ENCODE measurements at regions of chr19 and their contacts with region 1.

Region 1: DNA sequence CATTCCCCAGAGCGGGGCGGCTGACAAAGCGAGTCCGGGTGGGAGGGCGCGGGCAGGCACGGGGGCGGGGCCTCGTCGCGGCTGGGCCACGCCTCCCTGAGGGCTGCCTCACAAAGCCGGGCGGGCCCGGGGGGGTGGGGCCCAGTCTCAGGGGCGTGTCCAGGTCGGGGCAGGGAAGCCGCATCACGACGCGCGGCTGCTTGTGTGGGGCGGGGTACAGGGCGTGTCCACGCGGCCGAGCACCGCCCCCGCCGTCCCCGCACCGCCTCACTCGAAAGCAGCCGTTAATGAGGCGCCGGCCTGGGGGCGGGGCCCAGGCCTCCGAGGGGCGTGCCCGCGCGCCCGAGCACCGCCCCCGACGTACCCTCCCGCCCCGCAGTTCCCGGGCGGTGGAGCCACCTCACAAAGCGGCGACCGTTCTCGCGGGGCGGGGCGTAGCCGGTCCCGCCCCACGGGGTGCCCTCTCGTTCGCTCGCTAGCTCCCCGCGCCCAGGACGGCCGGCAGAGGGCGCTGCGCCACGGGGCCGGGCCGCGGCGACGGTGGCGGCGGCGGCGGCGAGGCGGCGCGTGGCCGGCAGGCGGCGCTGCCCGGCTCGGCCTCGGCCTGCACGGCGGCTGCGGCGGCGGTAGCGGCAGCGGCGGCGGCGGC is at the start of gene CARM1:
- DNase-seq: peak; percentile 98 to 99 (median 99)
- ATAC-seq: peak; percentile 94
- H3K4me3 ChIP-seq: peak within 1 kb of the TSS; percentile 98
- H3K27ac ChIP-seq: peak within 1 kb of the TSS; percentile 87
- H3K4me1 ChIP-seq: peaks cover 8 to 38% of the 10 kb centered on the region in 2 experiments
- H3K27me3 ChIP-seq: no peaks in the 10 kb centered on the region
- CTCF ChIP-seq: peak; percentile 48 to 94 (median 92); a peak in 5 of 6 replicates
- EP300 ChIP-seq: no peak
- POLR2A ChIP-seq: no peak
- RAD21 ChIP-seq: peak in 1 of 2 experiments; percentile 63; a peak in 2 of 4 replicates
- polyA plus RNA-seq, gene CARM1: 0.36 to 0.65 TPM

Region 2: GRCh38 chr19:10820173-10820572 is 50.9 kb before region 1 on chr19:
- CTCF ChIA-PET with region 1: no interaction called
- POLR2A ChIA-PET with region 1: no interaction called
- in situ Hi-C with region 1: no loop called
- intact Hi-C with region 1: no loop called
- DNase-seq: peak; percentile 42 to 52 (median 50)
- ATAC-seq: peak; percentile 78
- H3K4me3 ChIP-seq: no peak overlapping the region
- H3K27ac ChIP-seq: no peak overlapping the region; the same call in 2 of the 3 replicates
- H3K4me1 ChIP-seq: peaks cover 12 to 60% of the 10 kb centered on the region in 2 experiments; a peak in 4 of 5 replicates
- H3K27me3 ChIP-seq: no peaks in the 10 kb centered on the region
- CTCF ChIP-seq: peak; percentile 44 to 70 (median 54)
- EP300 ChIP-seq: no peak
- POLR2A ChIP-seq: no peak
- RAD21 ChIP-seq: peak in 1 of 2 experiments; percentile 49; a peak in 2 of 4 replicates

Region 3: GRCh38 chr19:10928525-10929401 is 57.7 kb after region 1 on chr19 and contains the starts of genes TIMM29 and YIPF2:
- CTCF ChIA-PET with region 1: no interaction called
- POLR2A ChIA-PET with region 1: interaction called, 3 read pairs
- in situ Hi-C with region 1: no loop called
- intact Hi-C with region 1: loop called (anchors 5 kb)
- DNase-seq: peak; percentile 94 to 99 (median 96)
- ATAC-seq: peak; percentile 94
- H3K4me3 ChIP-seq: peak within 1 kb of the TSS; percentile 93
- H3K27ac ChIP-seq: peak within 1 kb of the TSS; percentile 78
- H3K4me1 ChIP-seq: peaks cover 6 to 28% of the 10 kb centered on the region in 2 experiments; a peak in 4 of 5 replicates
- H3K27me3 ChIP-seq: no peaks in the 10 kb centered on the region
- CTCF ChIP-seq: no peak; a peak in 1 of 6 replicates
- EP300 ChIP-seq: peak; percentile 84
- POLR2A ChIP-seq: peak; percentile 79
- RAD21 ChIP-seq: no peak
- polyA plus RNA-seq, gene TIMM29: 2.4 to 3.2 TPM
- polyA plus RNA-seq, gene YIPF2: 1.3 to 2.2 TPM

Region 4: GRCh38 chr19:10975374-10976130 is 104.5 kb after region 1 on chr19:
- CTCF ChIA-PET with region 1: no interaction called
- POLR2A ChIA-PET with region 1: no interaction called
- in situ Hi-C with region 1: no loop called
- intact Hi-C with region 1: no loop called
- DNase-seq: no peak
- ATAC-seq: no peak
- H3K4me3 ChIP-seq: no peak overlapping the region
- H3K27ac ChIP-seq: no peak overlapping the region; the same call in 2 of the 3 replicates
- H3K4me1 ChIP-seq: peaks cover 0 to 10% of the 10 kb centered on the region in 2 experiments; a peak in 2 of 5 replicates
- H3K27me3 ChIP-seq: no peaks in the 10 kb centered on the region
- CTCF ChIP-seq: no peak
- EP300 ChIP-seq: no peak
- POLR2A ChIP-seq: no peak
- RAD21 ChIP-seq: no peak

Region 5: GRCh38 chr19:11405846-11406643 is 535.0 kb after region 1 on chr19:
- CTCF ChIA-PET with region 1: no interaction called
- POLR2A ChIA-PET with region 1: no interaction called
- in situ Hi-C with region 1: no loop called
- intact Hi-C with region 1: no loop called
- DNase-seq: peak in 1 of 4 experiments; percentile 6
- ATAC-seq: no peak
- H3K4me3 ChIP-seq: no peak overlapping the region
- H3K27ac ChIP-seq: no peak overlapping the region
- H3K4me1 ChIP-seq: peaks cover 6 to 14% of the 10 kb centered on the region in 2 experiments; a peak in 4 of 5 replicates
- H3K27me3 ChIP-seq: no peaks in the 10 kb centered on the region
- CTCF ChIP-seq: no peak
- EP300 ChIP-seq: no peak
- POLR2A ChIP-seq: no peak
- RAD21 ChIP-seq: no peak